BJ (cell line): ENCODE measurements at regions of chr1 and their contacts with region 1.

Region 1: DNA sequence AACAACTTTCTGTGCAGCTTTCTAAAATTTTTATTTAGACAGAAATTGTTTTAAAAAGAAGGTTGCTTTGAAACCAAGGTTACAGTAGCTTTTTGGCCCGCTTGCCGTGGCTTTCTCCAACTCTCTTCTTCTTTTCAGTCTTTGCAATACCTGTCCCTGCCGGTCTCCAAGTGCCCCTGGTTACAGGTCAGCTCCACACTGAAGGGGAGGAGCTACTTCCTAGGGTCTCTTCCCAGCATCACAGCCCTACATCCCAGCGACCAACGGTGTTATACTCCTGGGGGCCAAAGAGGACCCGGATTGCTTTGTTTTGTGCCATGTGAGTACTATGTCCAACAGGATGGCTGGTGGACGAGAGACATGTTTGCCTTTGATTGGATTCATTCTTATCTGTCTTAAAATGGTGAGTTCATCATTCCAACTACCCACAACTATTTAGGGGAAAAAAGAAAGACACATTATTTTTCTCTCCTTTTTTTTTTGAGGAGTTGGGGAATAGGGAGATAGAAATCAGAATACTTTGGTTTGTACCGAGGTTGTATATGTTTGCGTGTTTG is at the start of gene FNDC7:
- DNase-seq: no peak
- H3K4me3 ChIP-seq: no peak within 1 kb of the TSS
- H3K27me3 ChIP-seq: no peaks in the 10 kb centered on the region; the same call in 1 of the 2 replicates
- CTCF ChIP-seq: no peak
- polyA plus RNA-seq, gene FNDC7: not detected in 2 replicates

Region 2: GRCh38 chr1:108653431-108654105 is 59.1 kb before region 1 on chr1:
- CTCF ChIA-PET with region 1: no interaction called
- POLR2A ChIA-PET with region 1: no interaction called
- DNase-seq: no peak
- H3K4me3 ChIP-seq: no peak overlapping the region
- H3K27me3 ChIP-seq: no peaks in the 10 kb centered on the region
- CTCF ChIP-seq: no peak

Region 3: GRCh38 chr1:108691942-108692723 is 20.5 kb before region 1 on chr1 and contains the start of gene PRPF38B:
- CTCF ChIA-PET with region 1: interaction called, 4 read pairs
- POLR2A ChIA-PET with region 1: interaction called, 15 read pairs
- DNase-seq: peak; percentile 44
- H3K4me3 ChIP-seq: peak within 1 kb of the TSS; percentile 66
- H3K27me3 ChIP-seq: no peaks in the 10 kb centered on the region
- CTCF ChIP-seq: no peak
- polyA plus RNA-seq, gene PRPF38B: 13.3 and 20.1 TPM in 2 replicates